ENCODE measurements at regions of chr19 and their contacts with region 1.

Region 1: DNA sequence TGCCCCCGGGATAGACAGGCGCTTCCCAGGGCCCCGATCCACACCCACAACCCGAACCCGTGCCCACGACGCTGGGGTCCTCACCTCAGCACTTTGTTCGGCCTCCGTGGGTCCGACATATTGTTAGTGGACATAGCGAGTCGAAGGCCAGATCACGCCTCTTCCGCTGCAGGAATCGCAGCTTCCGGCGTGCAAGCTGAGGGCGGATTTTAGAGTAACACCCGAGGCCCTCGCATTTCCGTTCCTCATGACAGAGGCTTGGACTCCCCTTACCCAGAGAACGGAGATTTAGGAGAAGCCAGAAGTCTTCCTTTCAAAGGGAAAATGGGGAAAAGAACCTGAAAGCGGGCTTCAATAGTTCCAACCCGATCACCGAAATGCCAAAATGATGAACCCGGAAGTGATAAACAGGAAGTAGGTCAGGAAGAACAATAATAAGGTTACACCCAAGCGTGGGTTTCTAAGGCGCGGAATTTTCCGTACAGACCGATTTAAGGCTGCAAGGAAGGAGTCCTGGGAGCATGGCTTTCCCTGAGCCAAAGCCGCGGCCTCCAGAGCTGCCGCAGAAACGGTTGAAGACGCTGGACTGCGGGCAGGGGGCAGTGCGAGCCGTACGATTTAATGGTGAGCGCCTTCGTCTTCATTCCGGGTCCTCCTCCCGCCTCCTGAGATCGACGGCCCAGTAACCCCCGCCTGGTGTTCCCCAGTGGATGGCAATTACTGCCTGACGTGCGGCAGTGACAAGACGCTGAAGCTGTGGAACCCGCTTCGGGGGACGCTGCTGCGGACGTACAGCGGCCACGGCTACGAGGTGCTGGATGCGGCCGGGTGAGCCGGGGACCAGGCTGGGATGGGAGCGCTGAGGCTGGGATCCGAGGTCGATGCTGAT is 2.9 kb downstream of the WDR83 start:
- DNase-seq: peak; percentile 85
- CTCF ChIP-seq: no peak

Region 2: GRCh38 chr19:12137221-12137940 is 532.1 kb before region 1 on chr19:
- in situ Hi-C with region 1: no loop called
- DNase-seq: no peak
- CTCF ChIP-seq: peak; percentile 51

Region 3: DNA sequence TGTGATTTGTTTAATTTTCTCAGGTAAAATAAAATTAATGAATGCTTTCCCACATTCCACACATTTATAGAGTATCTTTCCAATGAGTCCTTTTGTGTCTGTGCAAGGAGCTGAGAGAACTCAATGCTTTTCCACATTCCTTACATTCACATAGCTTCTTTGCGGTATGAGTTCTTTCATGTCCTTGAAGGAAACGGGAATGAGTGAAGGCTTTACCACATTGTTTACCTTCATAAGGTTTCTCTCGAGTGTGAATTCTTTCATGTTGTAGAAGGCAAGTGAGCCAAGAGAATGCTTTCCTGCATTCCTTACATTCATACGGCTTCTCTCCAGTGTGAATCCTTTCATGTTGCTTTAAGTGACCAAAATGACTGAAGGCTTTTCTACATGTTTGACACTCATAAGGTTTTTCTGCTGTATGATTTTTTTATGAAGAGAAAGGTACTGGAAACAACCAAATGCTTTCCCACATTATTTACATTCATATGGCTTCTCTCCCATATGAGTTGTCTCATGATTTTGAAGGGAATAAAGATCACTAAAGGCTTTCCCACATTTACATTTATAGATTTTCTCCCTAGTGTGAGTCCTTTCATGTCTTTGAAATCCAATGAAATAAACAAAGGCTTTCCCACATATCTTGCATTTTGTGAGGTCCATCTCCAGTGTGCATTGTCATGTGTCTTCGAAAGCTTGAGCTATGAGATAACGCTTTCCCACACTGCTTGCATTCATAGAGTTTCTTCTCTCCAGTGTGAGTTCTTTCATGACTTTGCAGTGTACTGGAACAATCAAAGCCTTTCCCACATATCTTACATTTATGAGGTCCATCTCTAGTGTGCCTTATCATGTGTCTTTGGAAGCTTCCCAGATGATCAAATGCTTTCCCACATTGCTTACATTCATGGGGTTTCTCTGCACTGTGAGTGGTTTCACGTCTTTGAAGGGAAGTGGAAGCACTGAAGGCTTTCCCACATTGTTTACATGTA is 289.5 kb before region 1 on chr19:
- in situ Hi-C with region 1: no loop called
- DNase-seq: no peak
- CTCF ChIP-seq: no peak

Region 4: DNA sequence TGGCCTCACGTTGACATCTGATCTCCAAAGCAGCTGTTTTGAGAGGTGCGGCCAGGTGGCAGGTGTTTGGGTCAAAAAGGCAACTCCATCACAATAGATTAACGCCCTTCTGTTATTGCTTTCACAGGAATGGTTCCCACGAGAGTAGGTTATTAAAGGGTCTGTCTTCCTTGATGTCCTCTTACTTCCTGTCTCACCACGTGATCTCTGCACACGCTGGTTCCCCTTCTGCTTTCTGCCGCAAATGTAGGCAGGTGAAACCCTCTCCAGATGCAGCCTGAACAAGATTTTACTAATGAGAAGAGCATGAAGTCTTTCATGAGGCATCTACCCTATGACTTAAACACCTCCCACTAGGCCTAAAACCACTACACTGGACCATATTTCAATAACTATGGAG is 95.5 kb before region 1 on chr19:
- in situ Hi-C with region 1: loop called (anchors 10 kb)
- DNase-seq: peak; percentile 57
- CTCF ChIP-seq: no peak

Region 5: DNA sequence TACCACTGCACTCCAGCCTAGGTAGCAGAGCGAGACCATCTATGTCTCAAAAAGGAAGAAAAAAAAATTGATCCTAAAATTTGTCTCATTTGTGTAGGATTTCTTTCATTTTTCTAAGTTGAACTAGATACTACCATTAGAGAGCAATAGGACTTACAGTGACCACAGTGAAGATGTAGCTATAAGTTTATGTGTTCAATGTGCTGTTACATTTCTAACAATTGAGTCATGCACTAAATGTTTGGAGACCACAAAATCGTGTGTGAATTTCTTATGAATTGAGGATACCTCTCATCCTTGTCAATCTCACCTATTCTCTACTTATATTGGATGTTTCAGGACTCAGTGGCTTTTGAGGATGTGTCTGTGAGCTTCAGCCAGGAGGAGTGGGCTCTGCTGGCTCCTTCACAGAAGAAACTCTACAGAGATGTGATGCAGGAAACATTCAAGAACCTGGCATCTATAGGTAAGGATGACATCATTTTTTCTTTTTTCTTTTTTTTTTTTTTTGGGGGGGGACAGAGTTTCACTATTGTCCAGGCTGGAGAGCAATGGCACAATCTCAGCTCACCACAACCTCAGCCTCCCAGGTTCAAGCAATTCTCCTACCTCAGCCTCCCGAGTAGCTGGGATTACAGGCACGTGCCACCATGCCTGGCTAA is 46.0 kb before region 1 on chr19:
- in situ Hi-C with region 1: no loop called
- DNase-seq: no peak
- CTCF ChIP-seq: no peak